OCI-LY7 (cell line): ENCODE measurements at regions of chr12 and their contacts with region 1.

Region 1: GRCh38 chr12:110619534-110619953 is 5.6 kb downstream of the TCTN1 start:
- DNase-seq: peak; percentile 75
- H3K4me3 ChIP-seq: peak overlapping the region; percentile 59
- H3K27ac ChIP-seq: peak overlapping the region; percentile 19
- H3K4me1 ChIP-seq: peaks cover 50% of the 10 kb centered on the region
- CTCF ChIP-seq: peak; percentile 82

Region 2: GRCh38 chr12:110606253-110606611 is 13.3 kb before region 1 on chr12:
- CTCF ChIA-PET with region 1: no interaction called
- POLR2A ChIA-PET with region 1: interaction called, 21 read pairs
- intact Hi-C with region 1: no loop called
- DNase-seq: no peak
- H3K4me3 ChIP-seq: peak overlapping the region; percentile 64
- H3K27ac ChIP-seq: peak overlapping the region; percentile 91
- H3K4me1 ChIP-seq: peaks cover 56% of the 10 kb centered on the region
- CTCF ChIP-seq: no peak

Region 3: GRCh38 chr12:110647631-110648040 is 28.1 kb after region 1 on chr12:
- CTCF ChIA-PET with region 1: interaction called, 3 read pairs
- POLR2A ChIA-PET with region 1: interaction called, 5 read pairs
- intact Hi-C with region 1: loop called (anchors 2 kb)
- DNase-seq: peak; percentile 92
- H3K4me3 ChIP-seq: peak overlapping the region; percentile 16
- H3K27ac ChIP-seq: peak overlapping the region; percentile 45
- H3K4me1 ChIP-seq: peaks cover 44% of the 10 kb centered on the region
- CTCF ChIP-seq: no peak

Region 4: GRCh38 chr12:110698171-110698902 is 78.8 kb after region 1 on chr12:
- CTCF ChIA-PET with region 1: interaction called, 3 read pairs
- POLR2A ChIA-PET with region 1: interaction called, 3 read pairs
- intact Hi-C with region 1: loop called (anchors 1 kb)
- DNase-seq: peak; percentile 93
- H3K4me3 ChIP-seq: no peak overlapping the region
- H3K27ac ChIP-seq: no peak overlapping the region
- H3K4me1 ChIP-seq: peaks cover 22% of the 10 kb centered on the region
- CTCF ChIP-seq: peak; percentile 85